GM12878 (cell line): ENCODE measurements at regions of chr1 and their contacts with region 1.

Region 1: GRCh38 chr1:23634842-23635651 is 56.6 kb upstream of the RPL11 start:
- DNase-seq: peak; percentile 66
- ATAC-seq: peak; percentile 80
- H3K4me3 ChIP-seq: peak overlapping the region; percentile 41; the same call in 1 of the 2 replicates
- H3K27ac ChIP-seq: peak overlapping the region; percentile 62
- H3K4me1 ChIP-seq: peaks cover 12% of the 10 kb centered on the region
- H3K27me3 ChIP-seq: no peaks in the 10 kb centered on the region
- CTCF ChIP-seq: peak; percentile 82 to 97 (median 84)
- EP300 ChIP-seq: no peak
- POLR2A ChIP-seq: no peak
- RAD21 ChIP-seq: peak; percentile 88

Region 2: GRCh38 chr1:23249787-23250454 is 385.1 kb before region 1 on chr1:
- CTCF ChIA-PET with region 1: no interaction called
- POLR2A ChIA-PET with region 1: no interaction called
- RAD21 ChIA-PET with region 1: no interaction called
- SMC1A ChIA-PET with region 1: no interaction called
- in situ Hi-C with region 1: no loop called
- intact Hi-C with region 1: no loop called
- DNase-seq: no peak
- ATAC-seq: no peak
- H3K4me3 ChIP-seq: no peak overlapping the region
- H3K27ac ChIP-seq: no peak overlapping the region
- H3K4me1 ChIP-seq: peaks cover 4% of the 10 kb centered on the region; the same call in 1 of the 2 replicates
- H3K27me3 ChIP-seq: no peaks in the 10 kb centered on the region
- CTCF ChIP-seq: no peak
- EP300 ChIP-seq: no peak
- POLR2A ChIP-seq: no peak
- RAD21 ChIP-seq: no peak

Region 3: DNA sequence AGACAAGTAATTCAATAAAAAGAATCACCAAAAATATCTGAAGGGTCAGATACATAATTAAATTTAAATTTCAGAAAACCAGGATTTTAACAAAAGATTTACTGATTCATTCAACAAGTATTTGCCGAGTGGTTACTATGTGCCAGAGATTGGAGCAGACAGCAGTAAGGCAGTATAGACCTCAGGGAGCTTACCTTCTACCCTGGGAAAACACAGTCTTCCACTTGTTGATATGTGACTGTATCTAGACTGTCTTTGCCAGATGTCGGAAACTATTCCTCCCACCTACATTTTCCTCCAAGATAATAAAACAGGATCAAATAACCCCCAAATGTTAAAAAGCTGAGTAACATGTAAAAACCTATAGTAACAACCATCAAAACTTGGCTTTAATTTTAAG is 297.2 kb before region 1 on chr1:
- CTCF ChIA-PET with region 1: no interaction called
- POLR2A ChIA-PET with region 1: no interaction called
- RAD21 ChIA-PET with region 1: no interaction called
- SMC1A ChIA-PET with region 1: no interaction called
- in situ Hi-C with region 1: no loop called
- intact Hi-C with region 1: no loop called
- DNase-seq: no peak
- ATAC-seq: no peak
- H3K4me3 ChIP-seq: no peak overlapping the region
- H3K27ac ChIP-seq: no peak overlapping the region
- H3K4me1 ChIP-seq: peaks cover 3% of the 10 kb centered on the region; the same call in 1 of the 2 replicates
- H3K27me3 ChIP-seq: no peaks in the 10 kb centered on the region
- CTCF ChIP-seq: no peak
- EP300 ChIP-seq: no peak
- POLR2A ChIP-seq: no peak
- RAD21 ChIP-seq: no peak

Region 4: DNA sequence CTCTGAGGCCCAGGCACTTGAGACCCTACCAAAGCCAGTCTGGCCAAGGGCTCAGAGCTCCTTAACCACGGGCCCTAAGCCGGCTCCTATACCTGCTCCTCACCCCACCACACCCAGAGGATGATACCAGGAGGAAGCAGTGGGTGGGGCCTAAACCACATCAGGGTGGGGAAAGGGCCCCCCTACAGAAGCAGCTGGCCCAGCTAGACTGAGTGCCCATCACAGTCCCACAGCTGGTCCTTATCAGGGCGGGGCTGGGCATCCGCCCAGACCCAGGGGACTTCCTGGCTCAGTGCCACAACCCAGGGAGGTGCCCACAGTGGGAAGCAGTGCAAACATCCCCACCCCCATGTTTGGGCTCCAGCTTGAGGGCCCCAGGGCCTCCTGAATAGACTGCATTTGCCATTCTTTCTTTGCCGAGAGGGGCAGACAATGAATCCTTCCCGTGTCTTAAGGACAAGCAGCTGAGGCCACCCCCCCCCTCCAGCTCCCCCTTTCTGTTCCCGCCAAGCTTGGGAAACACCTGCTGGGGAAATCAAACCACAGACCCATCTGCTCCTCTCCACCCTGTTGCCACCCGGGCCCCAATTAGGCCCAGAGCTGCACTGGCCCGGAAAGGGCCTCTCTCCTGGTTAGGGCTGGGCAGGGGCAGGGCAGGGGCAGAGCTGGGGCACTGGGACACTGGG is 110.2 kb before region 1 on chr1:
- CTCF ChIA-PET with region 1: interaction called, 10 read pairs
- POLR2A ChIA-PET with region 1: no interaction called
- RAD21 ChIA-PET with region 1: interaction called, 11 read pairs
- SMC1A ChIA-PET with region 1: interaction called, 19 read pairs
- in situ Hi-C with region 1: no loop called
- intact Hi-C with region 1: no loop called
- DNase-seq: no peak
- ATAC-seq: peak; percentile 49
- H3K4me3 ChIP-seq: peak overlapping the region; percentile 44
- H3K27ac ChIP-seq: peak overlapping the region; percentile 77
- H3K4me1 ChIP-seq: peaks cover 56% of the 10 kb centered on the region
- H3K27me3 ChIP-seq: no peaks in the 10 kb centered on the region
- CTCF ChIP-seq: no peak
- EP300 ChIP-seq: no peak
- POLR2A ChIP-seq: no peak
- RAD21 ChIP-seq: no peak

Region 5: GRCh38 chr1:23559136-23559984 is 75.7 kb before region 1 on chr1 and contains the start of gene ID3:
- CTCF ChIA-PET with region 1: interaction called, 959 read pairs
- POLR2A ChIA-PET with region 1: interaction called, 50 read pairs
- RAD21 ChIA-PET with region 1: interaction called, 561 read pairs
- SMC1A ChIA-PET with region 1: interaction called, 584 read pairs
- in situ Hi-C with region 1: no loop called
- intact Hi-C with region 1: loop called (anchors 2 kb)
- DNase-seq: peak; percentile 69
- ATAC-seq: peak; percentile 76
- H3K4me3 ChIP-seq: peak within 1 kb of the TSS; percentile 96
- H3K27ac ChIP-seq: peak within 1 kb of the TSS; percentile 90
- H3K4me1 ChIP-seq: peaks cover 46% of the 10 kb centered on the region
- H3K27me3 ChIP-seq: no peaks in the 10 kb centered on the region
- CTCF ChIP-seq: no peak
- EP300 ChIP-seq: no peak
- POLR2A ChIP-seq: peak; percentile 98
- RAD21 ChIP-seq: 0 out of 2 replicates have a peak, but pooled peaks have one; percentile 1
- polyA plus RNA-seq, gene ID3: 42.7 to 104 TPM

Region 6: DNA sequence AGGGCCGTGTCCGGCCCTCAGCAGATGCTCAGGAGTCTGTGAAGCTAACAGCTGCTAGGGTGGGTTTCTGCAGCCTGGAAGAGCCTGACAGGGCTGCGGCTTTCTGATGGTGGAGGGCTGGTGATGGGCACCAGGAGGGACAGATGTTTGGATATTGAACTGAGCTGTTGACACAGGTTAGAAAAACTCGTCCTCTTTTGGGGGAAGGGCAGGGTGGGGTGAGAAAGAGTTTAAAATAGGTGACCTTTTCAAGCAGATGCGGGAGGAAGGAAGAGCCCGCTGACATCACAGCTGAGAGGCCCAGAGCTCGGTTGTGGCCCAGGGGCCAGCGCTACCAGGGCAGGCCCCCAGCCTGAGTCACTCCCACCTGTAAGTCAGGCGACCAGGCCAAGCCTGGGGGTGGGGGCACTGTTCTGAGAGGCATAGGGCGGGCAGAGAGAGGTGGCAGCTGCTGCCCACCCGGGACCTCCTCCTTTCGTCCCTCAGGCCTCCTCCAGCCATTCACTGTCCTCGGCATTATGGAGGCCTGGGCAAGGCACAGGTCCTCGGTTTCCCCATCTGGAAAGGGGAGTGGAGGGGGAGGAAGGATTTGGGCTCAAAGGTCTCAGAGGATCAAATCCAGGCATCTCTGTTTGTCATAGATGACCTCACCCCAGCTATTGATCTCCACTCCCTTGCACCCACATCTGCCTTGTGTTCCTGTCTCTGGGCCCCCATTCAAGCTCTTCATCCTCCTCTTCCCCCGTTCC is 43.4 kb before region 1 on chr1:
- CTCF ChIA-PET with region 1: interaction called, 94 read pairs
- POLR2A ChIA-PET with region 1: interaction called, 8 read pairs
- RAD21 ChIA-PET with region 1: interaction called, 38 read pairs
- SMC1A ChIA-PET with region 1: interaction called, 160 read pairs
- in situ Hi-C with region 1: no loop called
- intact Hi-C with region 1: no loop called
- DNase-seq: no peak
- ATAC-seq: peak; percentile 71
- H3K4me3 ChIP-seq: peak overlapping the region; percentile 9; the same call in 1 of the 2 replicates
- H3K27ac ChIP-seq: peak overlapping the region; percentile 93
- H3K4me1 ChIP-seq: peaks cover 72% of the 10 kb centered on the region
- H3K27me3 ChIP-seq: no peaks in the 10 kb centered on the region
- CTCF ChIP-seq: no peak
- EP300 ChIP-seq: peak; percentile 80 to 81; a peak in 3 of 4 replicates
- POLR2A ChIP-seq: peak; percentile 48; the same call in 1 of the 2 replicates
- RAD21 ChIP-seq: no peak

Region 7: DNA sequence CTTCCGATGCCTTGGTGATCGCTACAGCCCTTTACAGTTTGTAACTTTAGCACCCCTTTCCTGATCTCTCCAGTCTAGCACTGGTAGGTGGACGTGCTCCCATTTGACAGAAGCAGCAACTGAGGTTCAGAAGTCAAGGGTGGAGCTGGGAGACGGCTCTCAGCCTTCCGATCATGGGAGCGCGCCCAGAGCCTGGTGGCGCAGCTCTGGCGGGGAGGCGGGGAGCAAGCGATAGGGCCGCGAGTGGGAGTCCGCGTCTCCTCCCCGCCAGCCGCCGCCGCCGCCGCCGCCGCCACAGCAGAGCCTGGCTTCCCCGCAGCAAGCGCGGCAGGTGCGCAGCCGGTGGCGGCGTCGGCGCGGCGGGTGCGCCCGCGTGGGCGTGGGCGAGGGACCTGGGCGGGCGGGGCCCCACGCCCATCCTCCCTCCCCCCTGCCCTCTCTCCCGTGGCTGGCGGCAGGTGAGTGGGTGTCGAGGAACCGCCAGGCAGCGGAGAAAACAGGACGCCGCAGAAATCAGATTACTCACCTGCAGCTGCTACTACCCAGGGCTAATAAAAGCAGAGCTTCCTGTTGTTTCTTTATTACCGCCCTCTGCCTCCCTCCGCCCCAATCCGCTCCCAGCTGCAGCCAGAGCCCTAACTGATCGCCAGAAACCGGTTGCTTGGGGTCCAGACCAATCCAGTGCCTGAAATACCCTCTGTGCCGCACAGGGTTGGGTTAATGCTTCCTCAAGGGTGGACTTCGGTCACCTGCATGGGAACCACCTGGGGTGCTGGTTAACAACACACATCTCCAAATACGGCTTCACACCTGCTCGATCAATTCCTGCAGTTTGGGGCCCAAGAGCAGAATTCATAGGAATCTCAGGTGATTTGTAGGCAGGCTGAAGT is 15.5 kb before region 1 on chr1:
- CTCF ChIA-PET with region 1: interaction called, 34 read pairs
- POLR2A ChIA-PET with region 1: interaction called, 13 read pairs
- RAD21 ChIA-PET with region 1: interaction called, 18 read pairs
- SMC1A ChIA-PET with region 1: interaction called, 27 read pairs
- in situ Hi-C with region 1: no loop called
- intact Hi-C with region 1: no loop called
- DNase-seq: no peak
- ATAC-seq: peak; percentile 82
- H3K4me3 ChIP-seq: peak overlapping the region; percentile 64
- H3K27ac ChIP-seq: peak overlapping the region; percentile 51
- H3K4me1 ChIP-seq: peaks cover 36% of the 10 kb centered on the region
- H3K27me3 ChIP-seq: no peaks in the 10 kb centered on the region
- CTCF ChIP-seq: no peak
- EP300 ChIP-seq: peak; percentile 50 to 67; a peak in 1 of 4 replicates
- POLR2A ChIP-seq: peak; percentile 64
- RAD21 ChIP-seq: no peak

Region 8: DNA sequence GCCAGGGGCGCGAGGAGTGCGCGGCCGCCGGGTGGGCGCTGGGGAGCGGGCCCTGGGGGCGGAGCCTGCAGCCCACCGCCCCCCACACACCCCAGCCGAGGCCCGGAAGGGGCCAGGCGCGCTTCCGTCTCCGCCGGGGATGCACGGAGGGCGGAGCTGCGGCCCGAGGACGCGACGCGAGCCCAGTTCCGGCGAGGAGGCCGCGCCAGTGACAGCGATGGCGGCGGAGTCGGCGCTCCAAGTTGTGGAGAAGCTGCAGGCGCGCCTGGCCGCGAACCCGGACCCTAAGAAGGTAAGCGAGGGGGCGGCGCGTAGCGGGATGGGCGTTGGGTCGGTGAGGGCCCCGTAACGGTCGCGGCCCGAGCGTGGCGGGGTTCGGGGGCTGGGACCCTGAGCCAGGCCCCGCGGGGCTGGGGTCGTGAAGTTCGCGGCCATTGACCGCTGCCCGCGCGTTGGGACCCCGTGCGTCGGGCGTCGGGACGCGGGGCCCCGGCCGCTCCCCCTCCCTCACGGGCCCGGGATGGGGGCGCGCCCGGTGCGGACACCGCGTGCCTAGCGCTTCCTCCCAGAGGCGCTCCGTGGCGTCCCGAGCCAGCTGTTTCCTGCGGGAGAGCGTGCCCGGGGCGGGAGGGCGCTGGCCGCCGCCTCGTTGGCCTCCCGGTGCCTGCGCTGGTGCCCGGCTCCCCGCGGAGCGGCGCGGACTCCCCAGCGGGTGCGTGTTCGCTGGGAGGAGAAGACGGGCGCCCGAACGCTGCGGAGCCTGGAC is 108.4 kb after region 1 on chr1 and contains the start of gene ELOA:
- CTCF ChIA-PET with region 1: interaction called, 14 read pairs
- POLR2A ChIA-PET with region 1: interaction called, 3 read pairs
- RAD21 ChIA-PET with region 1: interaction called, 8 read pairs
- SMC1A ChIA-PET with region 1: interaction called, 11 read pairs
- in situ Hi-C with region 1: no loop called
- intact Hi-C with region 1: no loop called
- DNase-seq: no peak
- ATAC-seq: peak; percentile 92
- H3K4me3 ChIP-seq: peak within 1 kb of the TSS; percentile 84
- H3K27ac ChIP-seq: peak within 1 kb of the TSS; percentile 73
- H3K4me1 ChIP-seq: peaks cover 12% of the 10 kb centered on the region
- H3K27me3 ChIP-seq: no peaks in the 10 kb centered on the region
- CTCF ChIP-seq: no peak
- EP300 ChIP-seq: no peak
- POLR2A ChIP-seq: peak; percentile 99
- RAD21 ChIP-seq: no peak
- polyA plus RNA-seq, gene ELOA: 20.1 to 24.8 TPM